Prostate gland (tissue), 2 donors: ENCODE measurements at regions of chr18 and their contacts with region 1.

Region 1: DNA sequence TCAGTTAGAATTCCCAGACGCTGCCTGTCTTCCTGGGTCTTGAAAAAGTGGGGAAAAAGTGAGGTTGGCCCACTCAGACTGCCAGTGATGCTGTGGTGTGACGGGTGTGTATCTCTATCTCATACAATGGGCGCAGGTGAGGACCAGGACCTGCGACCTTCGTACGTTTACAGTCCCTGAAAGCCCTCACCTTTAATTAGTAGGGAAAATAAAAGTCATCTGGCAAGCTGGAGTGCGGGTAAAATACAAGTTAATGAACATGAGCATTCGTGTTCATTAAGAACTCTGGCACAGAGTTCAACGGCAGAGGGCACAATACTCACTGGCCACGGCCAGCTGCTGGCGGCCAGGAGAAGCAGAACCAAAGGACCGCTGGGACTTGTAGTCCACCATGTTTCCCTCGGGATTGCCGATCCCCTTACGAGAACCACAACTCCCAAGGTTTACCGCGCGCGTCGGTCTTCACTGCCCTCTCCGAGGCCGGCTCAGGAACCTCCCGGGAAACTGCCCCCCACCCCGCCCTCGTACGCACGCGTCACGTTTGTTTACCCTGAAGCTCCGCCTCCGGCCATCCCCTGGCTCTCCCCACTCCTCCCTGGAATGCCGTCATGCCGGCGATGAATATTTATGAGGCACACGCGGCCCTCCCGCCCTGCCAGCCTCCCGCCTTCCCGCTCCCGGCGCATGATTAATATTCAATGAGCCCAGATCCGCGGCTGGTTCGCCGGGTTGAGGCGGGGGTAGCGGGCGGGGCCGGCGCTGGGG is 488 bp upstream of the PHLPP1 start:
- DNase-seq: peak; percentile 100
- H3K4me3 ChIP-seq: peak overlapping the region; percentile 70 to 71
- H3K27ac ChIP-seq: peak overlapping the region; percentile 97
- H3K4me1 ChIP-seq: no peaks in the 10 kb centered on the region
- H3K27me3 ChIP-seq: no peaks in the 10 kb centered on the region
- CTCF ChIP-seq: peak; percentile 46 to 94 (median 86)
- POLR2A ChIP-seq: no peak

Region 2: DNA sequence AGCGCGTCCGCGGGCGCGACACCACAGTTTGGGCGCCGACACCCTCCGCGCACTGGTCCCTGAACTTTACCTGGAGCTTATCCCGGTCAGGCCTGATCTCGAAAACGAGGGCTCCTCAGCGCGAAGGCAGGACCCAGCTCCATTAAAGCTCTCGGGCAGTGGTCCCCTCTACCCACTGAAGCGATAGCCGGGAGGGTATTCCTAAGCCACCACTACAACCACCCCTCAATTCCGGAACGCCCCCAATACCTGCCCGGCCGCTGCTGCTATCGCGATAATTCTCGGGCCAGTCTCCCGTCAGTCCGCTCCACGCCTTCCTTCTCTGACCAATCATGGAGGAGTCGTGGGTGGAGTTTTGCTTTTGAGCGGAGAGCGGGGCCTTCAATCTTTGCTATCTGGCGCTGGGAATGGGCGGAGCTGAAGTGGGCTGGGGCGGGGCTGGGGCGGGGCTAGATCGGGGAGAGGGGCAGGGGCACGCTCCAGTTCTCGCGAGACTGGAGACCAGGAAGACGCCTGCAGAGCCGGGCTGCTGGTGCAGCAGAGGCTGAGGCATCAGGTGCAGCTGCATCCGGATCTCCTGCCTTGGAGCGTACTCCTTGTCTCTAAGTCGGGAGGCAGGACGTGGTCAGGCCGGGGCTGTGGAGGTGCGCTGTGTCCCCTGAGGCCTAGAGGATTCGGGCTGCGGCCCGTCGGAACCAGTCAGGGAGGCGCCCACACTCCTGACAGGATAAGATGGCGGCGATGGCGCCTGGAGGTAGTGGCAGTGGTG is 527.9 kb before region 1 on chr18 and contains the starts of genes PIGN and RELCH:
- intact Hi-C with region 1: loop called (anchors 10 kb)
- DNase-seq: peak; percentile 99
- H3K4me3 ChIP-seq: peak within 1 kb of the TSS; percentile 75 to 98
- H3K27ac ChIP-seq: peak within 1 kb of the TSS; percentile 72 to 76
- H3K4me1 ChIP-seq: no peaks in the 10 kb centered on the region
- H3K27me3 ChIP-seq: no peaks in the 10 kb centered on the region
- CTCF ChIP-seq: peak in 2 of 4 experiments; percentile 8 to 10
- POLR2A ChIP-seq: peak; percentile 70
- total RNA-seq, gene PIGN: 30.3 to 39.6 TPM
- total RNA-seq, gene RELCH: 34.8 to 49.0 TPM

Region 3: GRCh38 chr18:62522504-62523254 is 192.2 kb before region 1 on chr18 and contains the start of gene ZCCHC2:
- intact Hi-C with region 1: loop called (anchors 5 kb)
- DNase-seq: peak; percentile 98
- H3K4me3 ChIP-seq: peak within 1 kb of the TSS; percentile 84 to 85
- H3K27ac ChIP-seq: peak within 1 kb of the TSS; percentile 98
- H3K4me1 ChIP-seq: no peaks in the 10 kb centered on the region
- H3K27me3 ChIP-seq: no peaks in the 10 kb centered on the region
- CTCF ChIP-seq: peak in 2 of 4 experiments; percentile 2 to 17
- POLR2A ChIP-seq: peak; percentile 97
- total RNA-seq, gene ZCCHC2: 18.7 to 39.4 TPM

Region 4: GRCh38 chr18:62784966-62785413 is 70.1 kb after region 1 on chr18:
- intact Hi-C with region 1: loop called (anchors 10 kb)
- DNase-seq: no peak
- H3K4me3 ChIP-seq: no peak overlapping the region
- H3K27ac ChIP-seq: no peak overlapping the region
- H3K4me1 ChIP-seq: no peaks in the 10 kb centered on the region
- H3K27me3 ChIP-seq: no peaks in the 10 kb centered on the region
- CTCF ChIP-seq: no peak
- POLR2A ChIP-seq: no peak

Region 5: DNA sequence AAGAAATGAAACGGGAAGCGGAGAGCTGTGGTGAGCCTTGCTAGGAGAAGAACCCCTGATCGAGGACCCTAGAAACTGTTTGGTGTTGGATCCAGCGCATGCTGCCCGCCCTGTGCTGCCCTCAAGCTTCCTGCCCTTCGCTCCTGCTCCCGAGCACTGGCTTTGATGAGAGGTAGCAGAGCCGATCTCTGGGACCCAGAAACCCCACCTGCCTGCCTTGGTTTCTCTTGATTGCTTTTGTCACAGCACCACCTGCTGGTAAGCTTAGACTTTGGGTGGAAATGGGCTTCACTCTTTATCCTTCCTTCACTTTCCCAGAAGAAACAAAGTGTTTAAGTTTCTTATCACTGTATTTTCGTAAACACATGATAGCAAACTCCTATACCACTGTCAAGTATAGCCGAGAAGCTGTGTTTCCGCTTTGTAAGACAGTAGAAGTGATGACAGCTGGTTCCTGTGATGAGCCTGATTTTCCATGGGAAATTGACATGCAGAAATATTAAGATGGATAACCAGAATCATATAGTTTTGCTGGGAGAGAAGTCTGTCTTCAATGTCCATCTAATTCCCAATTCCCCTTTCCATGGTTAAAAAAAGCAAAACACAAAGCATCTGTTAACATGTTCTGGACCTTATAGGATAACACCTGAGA is 267.9 kb after region 1 on chr18:
- intact Hi-C with region 1: loop called (anchors 2 kb)
- DNase-seq: peak; percentile 62
- H3K4me3 ChIP-seq: no peak overlapping the region
- H3K27ac ChIP-seq: no peak overlapping the region
- H3K4me1 ChIP-seq: no peaks in the 10 kb centered on the region
- H3K27me3 ChIP-seq: no peaks in the 10 kb centered on the region
- CTCF ChIP-seq: peak; percentile 46 to 86 (median 84)
- POLR2A ChIP-seq: no peak